CD4-positive, alpha-beta memory T cell (primary cell): ENCODE measurements at regions of chr3 and their contacts with region 1.

Region 1: DNA sequence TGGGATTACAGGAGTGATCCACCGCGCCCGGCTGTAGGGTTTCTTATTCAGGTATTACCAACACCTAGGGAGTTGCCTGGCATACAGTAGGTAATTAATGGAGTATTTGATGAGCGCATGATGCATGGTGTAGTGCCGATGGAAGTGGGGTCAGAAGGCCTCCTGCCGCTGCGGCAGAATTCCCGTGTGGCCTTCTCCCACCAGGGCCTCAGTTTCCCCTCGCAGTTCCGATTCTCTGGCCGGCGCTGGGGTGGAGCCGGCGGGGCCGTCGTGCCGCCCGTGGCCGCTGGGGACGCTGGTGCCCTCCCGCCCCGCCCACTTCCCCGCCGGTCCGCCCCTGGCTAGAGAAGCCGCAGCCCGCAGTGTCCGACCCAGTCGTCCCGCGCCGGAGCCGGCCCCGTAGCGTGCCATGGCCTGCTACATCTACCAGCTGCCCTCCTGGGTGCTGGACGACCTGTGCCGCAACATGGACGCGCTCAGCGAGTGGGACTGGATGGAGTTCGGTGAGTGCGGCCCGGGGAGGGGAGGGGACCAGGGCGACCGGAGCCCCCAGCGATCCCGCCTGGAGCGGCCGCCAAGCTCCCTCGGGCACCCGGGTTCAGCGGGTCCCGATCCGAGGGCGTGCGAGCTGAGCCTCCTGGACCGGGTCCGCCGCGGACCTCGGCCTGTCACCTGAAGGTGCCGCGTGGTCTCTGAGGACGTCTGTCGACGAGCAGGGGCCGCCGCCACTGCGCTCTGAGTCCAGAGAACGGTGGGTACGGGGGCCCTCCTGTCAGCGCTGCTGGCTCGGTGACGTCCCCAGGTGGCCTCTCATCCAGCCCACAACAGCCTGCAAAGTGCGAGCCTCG is at the start of gene IRAK2:
- DNase-seq: peak; percentile 54 to 67 (median 59)
- H3K4me3 ChIP-seq: peak within 1 kb of the TSS; percentile 23 to 74
- H3K4me3 Mint-ChIP-seq: peak within 1 kb of the TSS; percentile 87 to 96 (median 90)
- H3K27ac ChIP-seq: peak within 1 kb of the TSS; percentile 74
- H3K27ac Mint-ChIP-seq: peak within 1 kb of the TSS; percentile 29 to 93 (median 81)
- H3K4me1 ChIP-seq: peaks cover 16% of the 10 kb centered on the region
- H3K4me1 Mint-ChIP-seq: peaks cover 12 to 32% (median 25%) of the 10 kb centered on the region in 4 donors
- H3K27me3 ChIP-seq: no peaks in the 10 kb centered on the region
- H3K27me3 Mint-ChIP-seq: no peaks in the 10 kb centered on the region
- total RNA-seq, gene IRAK2: 4.8 to 5.3 TPM

Region 2: GRCh38 chr3:10142707-10143566 is 21.8 kb before region 1 on chr3:
- CTCF ChIA-PET with region 1: interaction called, 4 read pairs
- POLR2A ChIA-PET with region 1: interaction called, 4 read pairs
- intact Hi-C with region 1: loop called (anchors 2 kb)
- DNase-seq: peak in 3 of 5 donors; percentile 14 to 46 (median 18)
- H3K4me3 ChIP-seq: peak overlapping the region; percentile 55 to 95
- H3K4me3 Mint-ChIP-seq: peak overlapping the region; percentile 90 to 98 (median 95)
- H3K27ac ChIP-seq: peak overlapping the region; percentile 94
- H3K27ac Mint-ChIP-seq: peak overlapping the region; percentile 88 to 99 (median 96)
- H3K4me1 ChIP-seq: peaks cover 45% of the 10 kb centered on the region
- H3K4me1 Mint-ChIP-seq: peaks cover 22 to 58% (median 32%) of the 10 kb centered on the region in 4 donors
- H3K27me3 ChIP-seq: no peaks in the 10 kb centered on the region
- H3K27me3 Mint-ChIP-seq: no peaks in the 10 kb centered on the region

Region 3: DNA sequence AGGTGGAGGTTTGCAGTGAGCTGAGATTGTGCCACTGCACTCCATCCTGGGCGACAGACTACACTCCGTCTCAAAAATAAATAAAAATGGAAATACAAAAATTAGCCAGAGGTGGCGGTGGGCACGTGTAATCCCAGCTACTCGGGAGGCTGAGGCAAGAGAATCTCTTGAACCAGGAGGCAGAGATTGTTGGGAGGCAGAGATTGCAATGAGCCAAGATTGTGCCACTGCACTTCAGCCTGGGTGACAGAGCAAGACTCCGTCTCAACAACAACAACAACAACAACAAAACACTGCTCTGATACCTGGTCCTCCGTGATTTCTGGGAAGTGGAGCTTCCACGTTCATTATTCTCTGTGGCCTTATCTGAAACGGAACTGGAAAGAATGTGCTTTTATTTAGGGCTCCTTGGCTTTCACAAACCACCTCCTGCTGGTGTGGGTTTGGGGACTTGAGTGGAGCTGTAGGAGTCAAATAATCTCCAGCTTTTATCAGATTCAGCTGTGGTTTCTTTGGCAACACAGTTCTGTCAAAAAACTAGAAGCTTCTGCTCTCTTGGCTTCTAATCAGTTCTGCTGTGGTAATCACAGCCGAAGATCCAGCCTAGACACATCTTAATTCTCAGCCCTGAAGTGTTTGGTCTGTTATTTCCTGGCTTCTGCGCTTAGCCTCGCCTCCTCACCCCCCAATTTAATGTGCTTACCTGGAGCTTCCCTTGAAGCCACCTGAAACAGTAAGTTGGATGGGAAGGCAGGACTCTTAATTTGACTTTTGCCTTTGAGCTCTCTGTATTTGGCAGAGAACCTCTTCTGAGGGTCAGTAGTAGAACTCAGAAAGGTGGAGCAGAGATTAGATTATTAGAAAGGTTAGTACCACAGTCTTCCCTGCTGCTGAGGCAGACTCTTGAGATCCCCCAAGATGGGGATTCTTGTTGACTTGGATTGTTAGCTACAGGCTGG is 21.3 kb after region 1 on chr3:
- CTCF ChIA-PET with region 1: interaction called, 48 read pairs
- POLR2A ChIA-PET with region 1: interaction called, 4 read pairs
- intact Hi-C with region 1: no loop called
- DNase-seq: peak in 4 of 5 donors; percentile 47 to 66 (median 50)
- H3K4me3 ChIP-seq: peak overlapping the region in 1 of 2 donors; percentile 10
- H3K4me3 Mint-ChIP-seq: peak overlapping the region; percentile 58 to 85 (median 75)
- H3K27ac ChIP-seq: peak overlapping the region; percentile 51
- H3K27ac Mint-ChIP-seq: peak overlapping the region; percentile 82 to 97 (median 94)
- H3K4me1 ChIP-seq: peaks cover 54% of the 10 kb centered on the region
- H3K4me1 Mint-ChIP-seq: peaks cover 41 to 62% (median 51%) of the 10 kb centered on the region in 4 donors
- H3K27me3 ChIP-seq: no peaks in the 10 kb centered on the region
- H3K27me3 Mint-ChIP-seq: no peaks in the 10 kb centered on the region

Region 4: DNA sequence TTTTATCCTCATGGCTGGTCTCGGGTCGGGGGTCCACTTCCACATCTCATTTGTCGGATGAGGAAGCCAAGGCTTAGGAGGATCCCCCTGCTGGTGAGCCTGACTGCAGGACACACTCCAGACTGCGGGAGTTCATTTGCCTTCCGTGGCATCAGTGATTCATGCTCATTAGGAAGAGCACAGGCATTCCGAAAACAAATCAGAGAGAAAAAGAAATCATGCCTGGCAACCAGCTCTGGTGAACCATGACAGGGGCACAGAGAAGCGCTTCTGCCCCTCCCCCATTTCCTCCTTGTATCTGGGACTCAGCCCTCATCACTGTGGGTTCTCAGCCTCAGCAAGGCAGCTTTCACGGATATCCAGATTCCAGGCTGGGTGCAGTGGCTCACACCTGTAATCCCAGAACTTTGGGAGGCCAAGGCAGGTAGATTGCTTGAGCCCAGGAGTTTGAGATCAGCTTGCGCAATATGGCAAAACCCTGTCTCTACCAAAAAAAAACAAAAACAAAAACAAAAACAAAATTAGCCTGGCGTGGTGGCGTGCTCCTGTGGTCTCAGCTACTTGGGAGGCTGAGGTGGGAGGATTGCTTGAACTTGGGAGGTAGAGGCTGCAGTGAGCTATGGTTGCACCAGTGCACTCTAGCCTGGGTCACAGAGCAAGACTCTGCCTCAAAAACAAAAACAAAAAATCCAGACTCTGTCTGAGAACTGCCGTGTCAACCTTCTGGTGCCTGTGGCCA is 28.4 kb after region 1 on chr3:
- CTCF ChIA-PET with region 1: interaction called, 48 read pairs
- POLR2A ChIA-PET with region 1: interaction called, 47 read pairs
- intact Hi-C with region 1: loop called (anchors 2 kb)
- DNase-seq: peak; percentile 54 to 77 (median 56)
- H3K4me3 ChIP-seq: peak overlapping the region in 1 of 2 donors; percentile 33
- H3K4me3 Mint-ChIP-seq: peak overlapping the region; percentile 69 to 89 (median 82)
- H3K27ac ChIP-seq: peak overlapping the region; percentile 87
- H3K27ac Mint-ChIP-seq: peak overlapping the region; percentile 98 to 100 (median 99)
- H3K4me1 ChIP-seq: peaks cover 92% of the 10 kb centered on the region
- H3K4me1 Mint-ChIP-seq: peaks cover 64 to 90% (median 77%) of the 10 kb centered on the region in 4 donors
- H3K27me3 ChIP-seq: no peaks in the 10 kb centered on the region
- H3K27me3 Mint-ChIP-seq: no peaks in the 10 kb centered on the region

Region 5: GRCh38 chr3:10198761-10199649 is 34.2 kb after region 1 on chr3:
- CTCF ChIA-PET with region 1: interaction called, 48 read pairs
- POLR2A ChIA-PET with region 1: interaction called, 47 read pairs
- intact Hi-C with region 1: loop called (anchors 2 kb)
- DNase-seq: peak; percentile 76 to 95 (median 80)
- H3K4me3 ChIP-seq: peak overlapping the region; percentile 2 to 21
- H3K4me3 Mint-ChIP-seq: peak overlapping the region in 7 of 8 donors; percentile 55 to 79 (median 73)
- H3K27ac ChIP-seq: peak overlapping the region; percentile 88
- H3K27ac Mint-ChIP-seq: peak overlapping the region; percentile 95 to 99 (median 97)
- H3K4me1 ChIP-seq: peaks cover 84% of the 10 kb centered on the region
- H3K4me1 Mint-ChIP-seq: peaks cover 42 to 81% (median 63%) of the 10 kb centered on the region in 4 donors
- H3K27me3 ChIP-seq: no peaks in the 10 kb centered on the region
- H3K27me3 Mint-ChIP-seq: no peaks in the 10 kb centered on the region

Region 6: GRCh38 chr3:10263646-10264363 is 99.0 kb after region 1 on chr3:
- CTCF ChIA-PET with region 1: interaction called, 13 read pairs
- POLR2A ChIA-PET with region 1: interaction called, 3 read pairs
- intact Hi-C with region 1: loop called (anchors 1 kb)
- DNase-seq: peak; percentile 66 to 80 (median 71)
- H3K4me3 ChIP-seq: peak overlapping the region in 1 of 2 donors; percentile 22
- H3K4me3 Mint-ChIP-seq: peak overlapping the region; percentile 72 to 91 (median 80)
- H3K27ac ChIP-seq: peak overlapping the region; percentile 64
- H3K27ac Mint-ChIP-seq: peak overlapping the region; percentile 78 to 97 (median 91)
- H3K4me1 ChIP-seq: peaks cover 83% of the 10 kb centered on the region
- H3K4me1 Mint-ChIP-seq: peaks cover 48 to 93% (median 76%) of the 10 kb centered on the region in 4 donors
- H3K27me3 ChIP-seq: no peaks in the 10 kb centered on the region
- H3K27me3 Mint-ChIP-seq: no peaks in the 10 kb centered on the region

Region 7: DNA sequence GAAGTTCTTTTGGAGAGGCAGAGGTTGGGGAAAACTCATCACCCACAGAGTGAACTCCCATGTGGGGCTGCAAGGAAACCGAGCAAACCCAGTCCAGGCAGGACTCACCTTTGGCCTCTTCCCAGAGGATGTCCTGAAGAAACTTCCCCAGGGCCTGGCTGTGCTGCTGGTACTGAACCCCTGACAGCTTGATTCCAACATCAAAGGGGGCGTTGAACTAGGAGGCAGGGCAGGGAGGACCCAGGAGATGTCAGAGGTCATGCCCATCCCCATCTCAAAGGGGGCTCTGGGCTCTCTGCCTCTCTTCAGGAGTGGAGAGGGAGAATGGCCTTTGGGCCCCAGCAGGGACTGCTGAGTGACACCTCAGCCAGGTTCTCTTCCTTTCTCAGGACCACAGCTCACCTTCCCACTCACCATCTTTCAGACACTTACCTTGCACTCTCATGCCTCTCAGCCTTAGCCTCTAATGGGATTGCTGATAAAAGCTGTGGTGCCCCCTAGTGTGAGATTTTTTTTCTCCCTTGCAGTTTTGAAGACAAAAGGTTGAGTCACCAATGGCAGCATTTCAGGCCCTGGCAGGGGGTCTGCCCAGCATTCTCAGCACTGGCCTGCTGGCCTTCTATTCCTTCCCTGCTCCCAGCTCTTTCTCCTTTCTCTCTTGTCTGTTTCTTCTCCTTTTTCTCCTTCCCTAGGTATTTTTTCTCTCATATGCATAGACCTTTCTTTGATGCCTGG is 122.0 kb after region 1 on chr3:
- CTCF ChIA-PET with region 1: interaction called, 3 read pairs
- POLR2A ChIA-PET with region 1: no interaction called
- intact Hi-C with region 1: loop called (anchors 2 kb)
- DNase-seq: peak in 3 of 5 donors; percentile 66 to 72 (median 66)
- H3K4me3 ChIP-seq: no peak overlapping the region
- H3K4me3 Mint-ChIP-seq: no peak overlapping the region
- H3K27ac ChIP-seq: no peak overlapping the region
- H3K27ac Mint-ChIP-seq: peak overlapping the region; percentile 2 to 57 (median 43)
- H3K4me1 ChIP-seq: peaks cover 23% of the 10 kb centered on the region
- H3K4me1 Mint-ChIP-seq: peaks cover 26 to 45% (median 29%) of the 10 kb centered on the region in 4 donors
- H3K27me3 ChIP-seq: no peaks in the 10 kb centered on the region
- H3K27me3 Mint-ChIP-seq: no peaks in the 10 kb centered on the region

Region 8: GRCh38 chr3:10310578-10310977 is 145.8 kb after region 1 on chr3:
- CTCF ChIA-PET with region 1: no interaction called
- POLR2A ChIA-PET with region 1: no interaction called
- intact Hi-C with region 1: no loop called
- DNase-seq: no peak
- H3K4me3 ChIP-seq: no peak overlapping the region
- H3K4me3 Mint-ChIP-seq: no peak overlapping the region
- H3K27ac ChIP-seq: no peak overlapping the region
- H3K27ac Mint-ChIP-seq: peak overlapping the region in 1 of 7 donors; percentile 5
- H3K4me1 ChIP-seq: no peaks in the 10 kb centered on the region
- H3K4me1 Mint-ChIP-seq: peaks cover 0 to 5% (median 2%) of the 10 kb centered on the region in 4 donors
- H3K27me3 ChIP-seq: no peaks in the 10 kb centered on the region
- H3K27me3 Mint-ChIP-seq: no peaks in the 10 kb centered on the region

Region 9: DNA sequence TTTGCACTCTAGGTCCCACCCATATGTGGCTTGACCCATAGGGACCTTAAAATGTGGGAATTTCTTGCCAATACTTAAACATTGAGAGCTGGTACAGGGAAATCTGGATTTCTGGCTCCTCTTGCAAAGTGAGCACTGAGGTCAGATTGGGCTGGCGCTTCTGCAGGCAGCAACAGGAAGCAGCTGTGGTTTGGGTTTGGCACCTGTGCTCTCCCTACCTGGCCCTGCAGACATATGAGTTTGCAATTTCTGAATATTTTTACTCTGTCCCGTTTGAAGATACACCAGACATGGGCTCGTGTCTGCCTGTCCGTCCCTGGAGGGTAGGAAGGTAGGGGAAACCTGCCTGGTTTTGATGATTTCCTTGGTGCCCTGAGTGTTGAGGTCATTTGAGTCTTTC is 230.9 kb after region 1 on chr3:
- CTCF ChIA-PET with region 1: no interaction called
- POLR2A ChIA-PET with region 1: no interaction called
- intact Hi-C with region 1: no loop called
- DNase-seq: peak; percentile 34 to 61 (median 50)
- H3K4me3 ChIP-seq: peak overlapping the region in 1 of 2 donors; percentile 33
- H3K4me3 Mint-ChIP-seq: peak overlapping the region in 7 of 8 donors; percentile 19 to 81 (median 71)
- H3K27ac ChIP-seq: no peak overlapping the region
- H3K27ac Mint-ChIP-seq: peak overlapping the region in 6 of 7 donors; percentile 8 to 80 (median 46)
- H3K4me1 ChIP-seq: peaks cover 58% of the 10 kb centered on the region
- H3K4me1 Mint-ChIP-seq: peaks cover 31 to 75% (median 47%) of the 10 kb centered on the region in 4 donors
- H3K27me3 ChIP-seq: no peaks in the 10 kb centered on the region
- H3K27me3 Mint-ChIP-seq: no peaks in the 10 kb centered on the region